Right ventricle myocardium inferior (tissue), 1 donor: ENCODE measurements at regions of chr7 and their contacts with region 1.

Region 1: GRCh38 chr7:124929467-124930172 is at the start of gene POT1:
- DNase-seq: peak; percentile 99
- ATAC-seq: peak; percentile 100
- total RNA-seq, gene POT1: 12.1 TPM

Region 2: GRCh38 chr7:123748171-123748733 is 1181.4 kb before region 1 on chr7:
- intact Hi-C with region 1: no loop called
- DNase-seq: peak; percentile 80
- ATAC-seq: peak; percentile 58

Region 3: DNA sequence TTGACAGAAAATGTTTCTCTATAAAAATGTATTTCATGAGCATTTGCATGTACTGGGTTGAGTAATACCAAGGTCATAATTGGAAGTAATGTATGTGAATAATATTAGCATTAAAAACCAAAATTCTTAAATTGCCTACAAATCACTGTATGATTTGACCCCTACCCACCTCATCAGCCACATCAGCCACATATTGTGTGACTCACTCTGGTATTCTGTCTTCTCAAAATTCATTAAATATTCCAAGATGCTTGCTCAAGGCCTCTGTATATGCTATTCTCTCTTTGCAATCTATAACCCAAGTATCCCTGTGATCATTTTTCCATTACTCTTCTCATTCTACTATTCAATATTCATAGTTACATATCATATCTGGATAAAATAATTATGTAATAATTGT is 21.4 kb before region 1 on chr7:
- intact Hi-C with region 1: no loop called
- DNase-seq: no peak
- ATAC-seq: no peak

Region 4: GRCh38 chr7:124965553-124965952 is 35.9 kb after region 1 on chr7:
- intact Hi-C with region 1: loop called (anchors 5 kb)
- DNase-seq: no peak
- ATAC-seq: no peak

Region 5: DNA sequence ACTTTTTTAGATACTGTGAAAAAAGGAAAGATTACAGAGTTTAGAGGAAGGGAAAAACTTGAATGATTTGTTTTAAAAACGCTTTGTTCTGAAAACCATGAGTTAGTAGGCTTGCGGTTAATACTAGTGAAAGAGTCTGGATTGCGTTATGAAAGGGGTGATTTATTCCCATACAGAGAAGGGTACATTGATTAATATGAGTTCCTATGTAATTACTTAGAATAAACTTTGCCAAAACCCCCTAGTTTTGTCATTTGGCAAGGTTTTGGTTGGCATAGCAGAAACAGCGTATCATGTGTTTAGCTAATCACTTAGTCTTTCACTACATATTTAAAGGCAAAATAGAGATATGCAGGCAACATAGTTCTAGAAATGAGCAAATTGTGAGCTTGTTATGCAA is 91.2 kb after region 1 on chr7:
- intact Hi-C with region 1: no loop called
- DNase-seq: no peak
- ATAC-seq: no peak